IMR-90 (cell line): ENCODE measurements at regions of chr2 and their contacts with region 1.

Region 1: GRCh38 chr2:67295851-67296250 is 101.3 kb upstream of the ETAA1 start:
- DNase-seq: peak; percentile 71
- ATAC-seq: peak; percentile 61
- H3K4me3 ChIP-seq: no peak overlapping the region
- H3K27ac ChIP-seq: peak overlapping the region; percentile 13; the same call in 1 of the 2 replicates
- H3K4me1 ChIP-seq: peaks cover 9% of the 10 kb centered on the region
- H3K27me3 ChIP-seq: no peaks in the 10 kb centered on the region
- CTCF ChIP-seq: no peak
- POLR2A ChIP-seq: peak; percentile 29; the same call in 1 of the 2 replicates
- RAD21 ChIP-seq: no peak

Region 2: GRCh38 chr2:67309281-67309680 is 13.4 kb after region 1 on chr2:
- CTCF ChIA-PET with region 1: no interaction called
- POLR2A ChIA-PET with region 1: no interaction called
- dilution Hi-C with region 1: no loop called
- in situ Hi-C with region 1: no loop called
- intact Hi-C with region 1: loop called (anchors 2 kb)
- DNase-seq: peak; percentile 54
- ATAC-seq: peak; percentile 58
- H3K4me3 ChIP-seq: no peak overlapping the region
- H3K27ac ChIP-seq: no peak overlapping the region
- H3K4me1 ChIP-seq: peaks cover 1% of the 10 kb centered on the region; the same call in 1 of the 2 replicates
- H3K27me3 ChIP-seq: no peaks in the 10 kb centered on the region
- CTCF ChIP-seq: no peak
- POLR2A ChIP-seq: no peak
- RAD21 ChIP-seq: no peak